Breast epithelium (tissue), 4 donors: ENCODE measurements at regions of chrX and their contacts with region 1.

Region 1: GRCh38 chrX:113033936-113034685 is 193.5 kb upstream of the AMOT start:
- DNase-seq: no peak
- H3K4me3 ChIP-seq: no peak overlapping the region
- H3K27ac ChIP-seq: no peak overlapping the region
- H3K4me1 ChIP-seq: no peaks in the 10 kb centered on the region
- H3K27me3 ChIP-seq: peaks cover 0 to 18% of the 10 kb centered on the region in 2 donors
- CTCF ChIP-seq: no peak
- POLR2A ChIP-seq: no peak

Region 2: DNA sequence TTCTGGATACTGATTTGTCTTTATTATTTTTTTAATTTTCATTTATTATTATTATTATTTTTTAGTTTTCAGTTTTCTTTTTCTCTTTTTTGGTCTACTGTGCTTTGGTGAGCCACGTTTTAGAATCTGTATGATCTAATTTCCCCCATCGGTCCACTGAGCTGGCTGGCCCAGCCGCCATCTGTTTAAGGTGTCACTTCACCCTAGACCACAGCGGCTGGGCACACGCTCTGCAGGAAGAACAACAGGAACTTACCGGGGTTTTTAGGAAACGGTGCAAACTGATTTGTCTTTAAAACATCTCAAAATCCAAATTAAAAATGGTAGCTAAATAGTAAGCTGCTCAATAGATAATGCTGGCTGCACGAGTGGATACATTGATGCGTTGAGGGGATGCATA is 144.7 kb before region 1 on chrX:
- intact Hi-C with region 1: loop called (anchors 10 kb)
- DNase-seq: no peak
- H3K4me3 ChIP-seq: no peak overlapping the region
- H3K27ac ChIP-seq: no peak overlapping the region
- H3K4me1 ChIP-seq: no peaks in the 10 kb centered on the region
- H3K27me3 ChIP-seq: peaks cover 0 to 12% of the 10 kb centered on the region in 2 donors
- CTCF ChIP-seq: no peak
- POLR2A ChIP-seq: no peak